Activated T-helper 1 cell treated with anti-CD3 and anti-CD28 coated beads, Interleukin-12 subunit alpha, Interleukin-12 subunit beta, Interleukin-2, Interleukin-4 antibody, amounts not matched to agents 30 ng/mL and 10 ng/mL and 1 ng/mL, durations not matched to agents 14 hours and 24 hours and 36 hours (primary cell): ENCODE measurements at regions of chr5 and their contacts with region 1.

Region 1: GRCh38 chr5:80672140-80672736 is 17.5 kb upstream of the DHFR start:
- DNase-seq: peak; percentile 49
- H3K4me3 Mint-ChIP-seq: no peak overlapping the region
- H3K27ac Mint-ChIP-seq: no peak overlapping the region
- H3K4me1 Mint-ChIP-seq: no peaks in the 10 kb centered on the region
- H3K27me3 Mint-ChIP-seq: no peaks in the 10 kb centered on the region

Region 2: DNA sequence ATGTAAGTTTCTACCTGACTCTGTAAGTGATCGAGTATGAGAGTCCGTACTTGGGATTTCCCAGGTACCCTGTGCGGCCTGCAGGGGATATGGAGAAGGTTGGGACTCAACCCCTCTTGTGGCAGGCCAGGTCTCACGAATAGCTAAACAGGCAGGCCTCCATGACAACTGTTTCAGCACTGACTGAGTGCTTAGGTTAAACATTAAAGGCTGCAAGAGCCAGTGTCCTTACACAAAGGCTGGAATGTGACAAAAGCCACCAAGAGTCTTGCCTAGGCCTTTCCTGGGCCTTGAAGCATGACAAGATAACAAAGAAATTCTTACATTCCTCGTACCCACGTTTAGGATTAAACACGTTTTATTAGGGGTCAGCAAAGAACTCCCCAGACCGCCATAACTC is 578.4 kb before region 1 on chr5:
- intact Hi-C with region 1: loop called (anchors 1 kb)
- DNase-seq: no peak
- H3K4me3 Mint-ChIP-seq: no peak overlapping the region
- H3K27ac Mint-ChIP-seq: no peak overlapping the region
- H3K4me1 Mint-ChIP-seq: peaks cover 15% of the 10 kb centered on the region
- H3K27me3 Mint-ChIP-seq: no peaks in the 10 kb centered on the region

Region 3: GRCh38 chr5:80346055-80346454 is 326.2 kb before region 1 on chr5:
- intact Hi-C with region 1: loop called (anchors 2 kb)
- DNase-seq: no peak
- H3K4me3 Mint-ChIP-seq: no peak overlapping the region
- H3K27ac Mint-ChIP-seq: no peak overlapping the region
- H3K4me1 Mint-ChIP-seq: no peaks in the 10 kb centered on the region
- H3K27me3 Mint-ChIP-seq: no peaks in the 10 kb centered on the region

Region 4: DNA sequence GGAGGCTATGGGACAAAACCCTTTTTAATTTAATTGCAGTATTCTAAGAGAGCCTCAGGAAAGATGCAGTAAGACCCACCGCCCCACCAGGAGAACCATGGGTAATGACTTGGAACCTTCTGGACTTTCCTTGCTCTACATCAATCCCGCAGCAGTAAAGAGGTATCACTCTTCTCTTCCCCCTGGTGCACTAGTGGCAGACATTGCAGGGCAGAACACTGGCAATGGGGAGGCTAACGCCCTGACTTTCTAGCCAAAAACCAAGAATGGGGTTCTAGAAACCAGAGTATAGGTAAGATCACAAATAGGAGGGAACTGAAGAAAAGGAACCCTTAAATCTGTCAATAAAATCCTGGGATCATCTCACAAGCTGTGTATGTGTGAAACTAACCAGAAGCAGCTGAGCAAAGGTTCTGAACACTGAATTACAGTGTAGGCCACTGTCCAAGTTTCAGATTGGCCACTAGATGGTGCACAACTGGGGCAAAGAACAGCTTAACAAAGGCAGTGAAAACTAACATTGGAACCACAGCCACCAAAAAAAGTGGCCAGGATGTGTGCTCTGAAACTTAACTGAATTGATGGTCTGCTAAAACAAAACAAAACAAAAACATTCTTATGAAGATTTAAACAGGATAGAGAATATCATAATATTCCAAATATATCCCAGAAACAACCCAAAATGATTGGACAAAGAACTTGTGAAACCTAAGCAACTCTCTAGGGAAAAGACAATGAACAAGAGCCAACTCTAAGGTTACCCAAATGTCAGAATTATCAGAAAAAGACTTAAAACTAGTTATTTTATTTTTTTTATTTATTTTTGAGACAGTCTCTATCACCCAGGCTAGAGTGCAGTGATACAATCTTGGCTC is 191.0 kb before region 1 on chr5:
- intact Hi-C with region 1: loop called (anchors 1 kb)
- DNase-seq: peak; percentile 11
- H3K4me3 Mint-ChIP-seq: no peak overlapping the region
- H3K27ac Mint-ChIP-seq: no peak overlapping the region
- H3K4me1 Mint-ChIP-seq: peaks cover 6% of the 10 kb centered on the region
- H3K27me3 Mint-ChIP-seq: peaks cover 2% of the 10 kb centered on the region

Region 5: DNA sequence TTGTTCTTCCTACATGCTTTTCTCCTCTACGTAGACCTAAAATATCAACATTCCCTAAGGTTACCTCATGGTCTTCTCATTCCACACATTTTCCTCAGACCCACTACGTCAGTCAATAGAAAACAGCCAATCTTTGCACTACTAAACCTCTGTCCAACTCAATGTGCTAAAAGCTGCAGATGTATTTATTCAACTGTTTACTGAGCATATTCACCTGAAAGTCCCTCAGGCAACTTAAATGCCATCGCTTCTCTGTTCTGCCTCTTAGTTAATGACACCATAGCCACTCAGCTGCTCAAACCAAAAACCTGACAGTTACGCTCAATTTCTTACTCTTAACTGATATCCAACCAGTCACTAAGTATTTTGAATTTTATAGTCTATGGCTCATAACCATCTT is 1003.6 kb after region 1 on chr5:
- intact Hi-C with region 1: no loop called
- DNase-seq: no peak
- H3K4me3 Mint-ChIP-seq: no peak overlapping the region
- H3K27ac Mint-ChIP-seq: no peak overlapping the region
- H3K4me1 Mint-ChIP-seq: no peaks in the 10 kb centered on the region
- H3K27me3 Mint-ChIP-seq: peaks cover 2% of the 10 kb centered on the region